Esophagus muscularis mucosa (tissue), 4 donors: ENCODE measurements at regions of chr20 and their contacts with region 1.

Region 1: DNA sequence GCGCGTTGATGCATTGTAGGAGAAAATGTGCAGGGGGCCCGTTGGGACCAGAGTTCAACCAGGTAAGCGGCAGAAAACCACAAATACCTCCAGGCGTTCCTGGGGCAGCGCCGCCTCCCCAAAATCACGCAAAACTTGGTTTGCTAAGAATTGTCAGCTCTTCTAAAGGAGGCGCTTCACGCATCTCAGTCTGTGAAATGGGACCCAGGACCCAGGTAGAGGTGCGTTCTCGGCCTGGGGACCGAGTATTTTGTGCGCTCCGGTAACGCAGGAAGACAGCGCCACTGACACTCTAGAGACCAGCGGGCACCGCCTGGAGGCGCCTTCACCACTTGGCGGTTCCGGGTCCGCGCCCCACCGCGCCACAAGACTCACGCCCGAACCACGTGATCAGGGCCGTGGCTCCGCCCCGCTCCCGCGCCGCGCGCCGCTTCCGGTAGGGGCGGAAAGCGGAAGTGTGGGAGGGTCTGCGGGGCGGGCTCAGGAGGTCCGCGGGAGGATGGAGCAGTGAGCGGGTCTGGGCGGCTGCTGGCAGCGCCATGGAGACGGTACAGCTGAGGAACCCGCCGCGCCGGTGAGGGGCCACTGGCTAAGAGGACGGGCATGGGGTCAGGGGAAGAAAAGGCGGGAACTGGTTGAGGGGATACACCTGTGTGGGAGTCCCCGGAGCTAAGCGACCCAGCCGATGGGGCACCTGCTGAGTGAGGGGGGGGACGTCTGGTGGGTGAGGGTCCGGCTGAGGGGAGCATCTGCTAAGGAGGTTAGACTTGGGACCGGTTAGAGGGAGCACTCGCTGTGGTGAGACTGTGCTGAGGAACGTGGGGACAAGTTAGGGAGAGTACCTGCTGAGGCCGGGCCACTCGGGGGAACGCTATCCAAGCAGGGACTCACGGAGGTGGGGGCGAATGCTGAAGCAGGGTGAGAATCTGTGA is at the start of gene STK4:
- DNase-seq: peak; percentile 98
- H3K4me3 ChIP-seq: peak within 1 kb of the TSS; percentile 71 to 88 (median 78)
- H3K27ac ChIP-seq: peak within 1 kb of the TSS; percentile 77 to 87 (median 82)
- H3K4me1 ChIP-seq: peaks cover 14 to 58% (median 54%) of the 10 kb centered on the region in 4 donors
- H3K27me3 ChIP-seq: no peaks in the 10 kb centered on the region
- CTCF ChIP-seq: peak; percentile 45 to 64 (median 58)
- EP300 ChIP-seq: no peak
- POLR2A ChIP-seq: peak; percentile 46
- total RNA-seq, gene STK4: 26.0 to 31.6 (median 27.7) TPM

Region 2: DNA sequence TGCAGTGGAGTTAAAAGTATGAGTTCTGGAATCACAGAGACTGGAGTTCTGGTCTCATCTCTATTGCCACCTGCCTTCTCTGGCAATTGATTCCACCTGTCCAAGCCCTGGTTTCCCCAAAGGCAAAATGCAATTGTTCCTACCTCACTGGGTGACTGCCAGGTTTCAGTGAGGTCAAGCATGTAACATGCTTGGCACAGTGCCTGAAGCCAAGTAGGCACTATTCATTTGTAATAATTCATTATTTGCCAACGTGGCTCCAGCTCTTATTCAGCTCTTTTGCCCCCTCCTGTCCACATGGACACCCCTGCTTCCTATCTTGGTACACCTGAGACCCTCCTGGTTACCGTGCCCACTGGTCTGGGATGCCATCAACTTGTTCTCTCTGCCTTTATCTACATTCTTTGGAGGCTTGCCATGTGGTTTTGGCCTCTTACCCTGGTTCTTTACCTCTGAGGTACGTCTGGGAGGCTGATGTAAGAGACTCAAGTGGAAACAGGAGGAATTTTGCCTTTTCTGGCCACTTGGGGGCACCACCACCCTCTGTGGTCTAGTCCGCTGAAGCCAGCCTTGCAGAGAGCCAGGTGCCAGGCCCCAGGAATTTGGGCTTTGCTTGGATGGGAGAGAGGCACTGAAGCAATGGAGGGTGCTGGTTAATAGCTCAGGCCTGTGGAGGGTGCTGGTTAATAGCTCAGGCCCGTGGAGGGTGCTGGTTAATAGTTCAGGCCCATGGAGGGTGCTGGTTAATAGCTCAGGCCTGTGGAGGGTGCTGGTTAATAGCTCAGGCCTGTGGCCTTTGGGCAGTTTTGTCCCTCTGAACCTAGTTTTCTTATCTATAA is 218.9 kb before region 1 on chr20:
- intact Hi-C with region 1: loop called (anchors 10 kb)
- DNase-seq: peak; percentile 96
- H3K4me3 ChIP-seq: peak overlapping the region; percentile 67 to 75 (median 74)
- H3K27ac ChIP-seq: no peak overlapping the region
- H3K4me1 ChIP-seq: peaks cover 28 to 57% (median 54%) of the 10 kb centered on the region in 4 donors
- H3K27me3 ChIP-seq: peaks cover 0 to 37% (median 7%) of the 10 kb centered on the region in 4 donors
- CTCF ChIP-seq: peak; percentile 59 to 79 (median 65)
- EP300 ChIP-seq: no peak
- POLR2A ChIP-seq: no peak

Region 3: GRCh38 chr20:44885392-44886265 is 80.7 kb before region 1 on chr20 and contains the start of gene YWHAB:
- intact Hi-C with region 1: loop called (anchors 5 kb)
- DNase-seq: peak; percentile 100
- H3K4me3 ChIP-seq: peak within 1 kb of the TSS; percentile 83 to 98 (median 90)
- H3K27ac ChIP-seq: peak within 1 kb of the TSS; percentile 95 to 99 (median 98)
- H3K4me1 ChIP-seq: peaks cover 43 to 55% (median 53%) of the 10 kb centered on the region in 4 donors
- H3K27me3 ChIP-seq: no peaks in the 10 kb centered on the region
- CTCF ChIP-seq: peak in 1 of 3 experiments; percentile 45
- EP300 ChIP-seq: no peak
- POLR2A ChIP-seq: peak; percentile 70
- total RNA-seq, gene YWHAB: 121 to 140 (median 130) TPM

Region 4: DNA sequence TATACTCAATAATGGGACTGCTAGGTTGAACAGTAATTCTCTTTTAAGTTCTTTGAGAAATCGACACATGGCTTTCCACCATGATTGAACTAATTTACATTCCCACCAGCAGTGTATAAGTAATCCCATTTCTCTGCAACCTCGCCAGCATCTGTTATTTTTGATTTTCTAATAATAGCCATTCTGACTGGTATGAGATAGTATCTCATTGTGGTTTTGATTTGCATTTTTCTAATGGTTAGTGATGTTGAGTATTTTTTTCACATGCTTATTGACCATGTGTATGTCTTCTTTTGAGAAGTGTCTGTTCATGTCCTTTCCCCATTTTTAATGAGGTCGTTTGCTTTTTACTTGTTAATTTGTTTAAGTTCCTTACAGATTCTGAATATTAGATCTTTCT is 66.5 kb after region 1 on chr20:
- intact Hi-C with region 1: no loop called
- DNase-seq: no peak
- H3K4me3 ChIP-seq: no peak overlapping the region
- H3K27ac ChIP-seq: no peak overlapping the region
- H3K4me1 ChIP-seq: peaks cover 5 to 18% (median 16%) of the 10 kb centered on the region in 4 donors
- H3K27me3 ChIP-seq: no peaks in the 10 kb centered on the region
- CTCF ChIP-seq: no peak
- EP300 ChIP-seq: no peak
- POLR2A ChIP-seq: no peak

Region 5: GRCh38 chr20:45061244-45061643 is 94.9 kb after region 1 on chr20:
- intact Hi-C with region 1: no loop called
- DNase-seq: no peak
- H3K4me3 ChIP-seq: no peak overlapping the region
- H3K27ac ChIP-seq: no peak overlapping the region
- H3K4me1 ChIP-seq: peaks cover 0 to 4% (median 2%) of the 10 kb centered on the region in 4 donors
- H3K27me3 ChIP-seq: no peaks in the 10 kb centered on the region
- CTCF ChIP-seq: no peak
- EP300 ChIP-seq: no peak
- POLR2A ChIP-seq: no peak